ENCODE measurements at regions of chr6 and their contacts with region 1.

Region 1: GRCh38 chr6:86969573-86969972 is 32.2 kb downstream of the HTR1E start:
- DNase-seq: no peak
- ATAC-seq: no peak
- H3K4me3 Mint-ChIP-seq: no peak overlapping the region
- H3K27ac Mint-ChIP-seq: no peak overlapping the region
- H3K4me1 Mint-ChIP-seq: no peaks in the 10 kb centered on the region
- H3K27me3 Mint-ChIP-seq: peaks cover 6% of the 10 kb centered on the region

Region 2: DNA sequence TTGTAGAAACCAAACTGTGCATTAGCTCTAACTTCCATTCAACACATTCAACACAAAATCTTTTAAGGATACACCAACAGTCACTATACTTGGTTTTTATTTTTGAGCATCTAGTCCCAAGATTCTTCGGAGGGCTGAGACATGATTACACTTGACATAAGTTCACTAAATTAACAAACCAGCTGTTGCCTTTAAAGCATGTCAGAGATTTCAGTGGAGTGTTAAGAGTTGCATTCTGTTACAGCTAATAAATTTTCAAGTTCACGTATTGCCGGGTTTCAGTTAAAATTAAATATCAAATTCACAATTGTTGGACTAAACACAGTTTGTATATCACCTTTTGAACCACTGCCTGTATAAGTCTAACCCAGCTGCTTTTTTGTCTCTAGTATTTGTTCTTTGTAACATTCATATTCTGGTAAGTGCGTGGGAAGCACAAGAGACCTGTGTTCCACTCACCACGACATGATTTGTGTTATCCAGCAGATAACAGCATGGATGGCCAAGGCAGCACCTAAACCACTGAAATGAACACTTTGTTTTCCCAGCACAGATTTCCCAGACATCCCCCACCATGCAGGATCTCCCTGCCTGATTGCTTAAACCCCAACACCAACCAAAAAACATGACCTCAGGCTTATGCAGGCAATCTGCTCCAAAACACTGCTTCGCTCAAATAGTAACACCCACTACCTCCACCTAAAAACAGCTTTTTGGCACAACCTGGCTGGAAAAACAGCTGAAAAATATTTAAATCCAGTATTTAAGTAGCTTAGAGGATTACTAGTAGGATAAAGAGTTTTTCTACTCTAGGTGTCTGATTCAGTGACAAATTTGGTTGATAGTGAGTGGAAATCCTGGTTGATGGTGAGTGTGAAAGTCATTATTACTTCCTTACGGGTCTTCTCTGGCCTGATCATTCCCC is 1806.2 kb before region 1 on chr6:
- CTCF ChIA-PET with region 1: no interaction called
- POLR2A ChIA-PET with region 1: no interaction called
- intact Hi-C with region 1: loop called in 1 of 2 experiments (anchors 10 kb)
- DNase-seq: no peak
- ATAC-seq: no peak
- H3K4me3 Mint-ChIP-seq: no peak overlapping the region
- H3K27ac Mint-ChIP-seq: no peak overlapping the region
- H3K4me1 Mint-ChIP-seq: no peaks in the 10 kb centered on the region
- H3K27me3 Mint-ChIP-seq: no peaks in the 10 kb centered on the region